ENCODE measurements at regions of chr5 and their contacts with region 1.

Region 1: DNA sequence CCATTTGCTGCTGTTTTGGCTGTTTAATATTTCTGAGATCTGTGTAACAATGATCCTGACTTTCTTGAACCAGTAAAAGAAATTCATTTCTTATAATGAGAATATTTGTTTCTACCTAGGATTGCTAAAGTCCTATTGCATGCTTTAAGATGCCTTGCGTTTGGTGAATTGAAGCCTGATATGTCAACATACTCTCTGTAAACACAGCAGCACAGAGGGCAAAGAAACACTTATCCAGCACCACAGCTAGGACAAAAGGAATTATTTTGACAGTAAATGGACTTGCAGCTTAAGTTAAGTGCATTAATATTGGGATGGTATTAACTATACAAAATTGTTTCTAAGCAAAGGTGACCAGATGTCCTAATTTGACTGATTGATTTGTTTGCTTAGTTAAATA is 2031.2 kb upstream of the CDH6 start:
- DNase-seq: no peak
- H3K4me3 ChIP-seq: no peak overlapping the region
- H3K4me3 Mint-ChIP-seq: no peak overlapping the region
- H3K27ac Mint-ChIP-seq: no peak overlapping the region
- H3K4me1 ChIP-seq: no peaks in the 10 kb centered on the region
- H3K4me1 Mint-ChIP-seq: no peaks in the 10 kb centered on the region
- H3K27me3 ChIP-seq: no peaks in the 10 kb centered on the region
- H3K27me3 Mint-ChIP-seq: no peaks in the 10 kb centered on the region
- CTCF ChIP-seq: no peak

Region 2: GRCh38 chr5:28703651-28704260 is 458.5 kb before region 1 on chr5:
- CTCF ChIA-PET with region 1: no interaction called
- POLR2A ChIA-PET with region 1: no interaction called
- intact Hi-C with region 1: no loop called
- DNase-seq: no peak
- H3K4me3 ChIP-seq: no peak overlapping the region
- H3K4me3 Mint-ChIP-seq: no peak overlapping the region
- H3K27ac Mint-ChIP-seq: no peak overlapping the region
- H3K4me1 ChIP-seq: no peaks in the 10 kb centered on the region
- H3K4me1 Mint-ChIP-seq: no peaks in the 10 kb centered on the region
- H3K27me3 ChIP-seq: no peaks in the 10 kb centered on the region
- H3K27me3 Mint-ChIP-seq: no peaks in the 10 kb centered on the region
- CTCF ChIP-seq: no peak

Region 3: DNA sequence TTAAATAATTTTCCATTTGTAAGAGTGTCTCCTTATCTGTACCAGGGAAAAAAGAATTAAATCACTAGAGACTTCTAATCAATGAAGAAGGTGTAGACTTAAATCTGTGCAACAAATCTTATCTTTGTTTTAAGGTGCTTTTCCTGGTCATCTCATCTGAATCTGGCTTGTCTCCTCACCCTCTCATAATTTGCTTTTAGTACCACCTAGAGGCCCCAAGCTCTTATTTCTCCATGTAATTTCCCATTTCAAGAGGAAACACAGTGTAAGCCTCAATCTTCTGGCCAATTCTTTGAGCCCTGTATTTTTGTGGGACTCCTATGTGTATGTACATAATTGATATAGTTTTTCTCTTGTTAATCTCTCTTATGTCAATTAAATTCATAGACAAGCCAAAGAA is 55.8 kb after region 1 on chr5:
- CTCF ChIA-PET with region 1: no interaction called
- POLR2A ChIA-PET with region 1: no interaction called
- intact Hi-C with region 1: loop called (anchors 5 kb)
- DNase-seq: peak in 1 of 2 experiments; percentile 5
- H3K4me3 ChIP-seq: no peak overlapping the region
- H3K4me3 Mint-ChIP-seq: no peak overlapping the region
- H3K27ac Mint-ChIP-seq: no peak overlapping the region
- H3K4me1 ChIP-seq: 0 out of 2 replicates have a peak, but pooled peaks cover 4% of the 10 kb centered on the region
- H3K4me1 Mint-ChIP-seq: peaks cover 4% of the 10 kb centered on the region
- H3K27me3 ChIP-seq: no peaks in the 10 kb centered on the region
- H3K27me3 Mint-ChIP-seq: no peaks in the 10 kb centered on the region
- CTCF ChIP-seq: peak in 1 of 2 experiments; percentile 29